ENCODE measurements at regions of chr12 and their contacts with region 1.

Region 1: DNA sequence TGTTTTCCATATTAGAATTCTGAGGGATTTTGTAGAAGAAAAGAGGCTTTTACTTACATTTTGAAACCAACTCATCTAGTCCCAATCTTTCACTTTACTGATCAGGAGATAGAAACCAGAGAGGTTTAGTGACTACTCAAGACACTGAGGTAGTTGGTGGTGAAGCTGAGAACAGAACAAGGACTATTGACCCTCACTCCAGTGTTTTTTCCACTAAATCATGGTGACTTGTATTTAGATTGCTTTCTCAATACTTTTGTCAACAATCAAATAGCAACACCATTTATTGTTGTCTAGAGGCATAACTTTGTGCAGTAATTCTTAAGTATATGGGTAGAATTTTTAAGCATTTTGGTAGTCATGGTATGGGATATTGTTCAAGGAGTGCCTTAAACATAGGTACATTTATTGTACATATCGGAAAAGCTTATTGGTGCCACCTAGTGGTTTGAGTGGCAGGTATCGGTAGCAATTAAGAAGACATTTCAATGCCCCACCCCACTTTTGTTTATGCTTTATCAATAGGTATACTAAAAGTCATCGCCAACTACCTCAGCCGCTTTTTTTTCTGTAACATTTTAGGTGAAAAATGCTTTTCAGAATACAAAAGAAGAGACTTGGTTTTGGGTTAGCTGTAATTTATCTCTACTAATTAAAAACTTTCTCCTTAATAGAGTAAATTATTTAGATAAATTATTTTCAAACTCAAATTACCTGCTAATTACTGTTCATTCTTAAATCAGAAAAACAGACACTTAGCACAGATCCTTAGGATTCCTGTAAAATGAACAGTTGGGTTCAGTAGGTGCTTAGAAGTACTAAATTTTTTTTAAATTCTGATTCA is 47.3 kb upstream of the PAWR start:
- DNase-seq: no peak
- H3K4me3 Mint-ChIP-seq: no peak overlapping the region
- H3K27ac Mint-ChIP-seq: no peak overlapping the region
- H3K4me1 Mint-ChIP-seq: no peaks in the 10 kb centered on the region
- H3K27me3 Mint-ChIP-seq: peaks cover 4% of the 10 kb centered on the region

Region 2: DNA sequence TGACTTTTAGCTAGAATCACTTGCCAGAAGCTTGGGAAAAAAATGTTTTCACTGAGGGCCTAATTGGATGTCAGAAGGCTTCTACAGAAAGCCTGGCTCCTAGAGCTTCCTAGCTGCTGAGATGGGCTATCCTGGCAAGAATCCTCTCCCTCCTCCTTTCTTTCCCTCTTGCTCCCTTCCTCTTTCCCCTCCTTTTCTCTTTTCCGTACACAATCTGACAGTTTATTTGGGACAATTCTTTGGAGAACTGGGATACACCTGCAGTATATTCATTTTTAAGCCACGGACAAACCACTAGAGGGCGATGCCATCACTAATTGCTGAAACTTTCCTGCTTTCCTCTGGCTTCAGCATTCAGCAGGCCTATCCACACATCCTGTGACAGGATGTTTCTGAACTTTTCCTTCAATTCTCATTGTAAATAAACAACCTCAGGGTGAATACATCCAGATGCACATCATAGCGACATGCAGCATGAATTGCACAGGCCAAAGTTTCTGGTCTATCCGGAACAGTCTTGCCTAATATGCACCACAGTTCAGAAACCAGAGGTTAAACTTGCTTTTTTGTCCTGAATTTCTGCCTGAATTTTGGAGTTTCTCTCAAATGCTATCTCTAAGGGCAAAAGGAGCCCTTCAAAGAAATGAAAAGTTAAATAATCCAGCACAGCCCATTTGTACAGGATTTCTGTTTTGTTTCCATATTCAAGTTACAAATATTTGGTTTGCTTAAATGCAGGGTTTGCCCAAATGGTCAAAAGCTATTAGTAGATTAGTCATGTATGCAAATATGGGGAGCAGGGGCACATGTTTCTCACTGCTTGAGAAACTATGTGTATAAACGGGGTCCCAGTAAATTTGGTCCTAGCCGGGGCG is 190.1 kb before region 1 on chr12:
- intact Hi-C with region 1: loop called (anchors 1 kb)
- DNase-seq: no peak
- H3K4me3 Mint-ChIP-seq: no peak overlapping the region
- H3K27ac Mint-ChIP-seq: no peak overlapping the region
- H3K4me1 Mint-ChIP-seq: no peaks in the 10 kb centered on the region
- H3K27me3 Mint-ChIP-seq: no peaks in the 10 kb centered on the region

Region 3: GRCh38 chr12:79645235-79645630 is 92.9 kb before region 1 on chr12:
- intact Hi-C with region 1: no loop called
- DNase-seq: no peak
- H3K4me3 Mint-ChIP-seq: no peak overlapping the region
- H3K27ac Mint-ChIP-seq: no peak overlapping the region
- H3K4me1 Mint-ChIP-seq: no peaks in the 10 kb centered on the region
- H3K27me3 Mint-ChIP-seq: no peaks in the 10 kb centered on the region

Region 4: DNA sequence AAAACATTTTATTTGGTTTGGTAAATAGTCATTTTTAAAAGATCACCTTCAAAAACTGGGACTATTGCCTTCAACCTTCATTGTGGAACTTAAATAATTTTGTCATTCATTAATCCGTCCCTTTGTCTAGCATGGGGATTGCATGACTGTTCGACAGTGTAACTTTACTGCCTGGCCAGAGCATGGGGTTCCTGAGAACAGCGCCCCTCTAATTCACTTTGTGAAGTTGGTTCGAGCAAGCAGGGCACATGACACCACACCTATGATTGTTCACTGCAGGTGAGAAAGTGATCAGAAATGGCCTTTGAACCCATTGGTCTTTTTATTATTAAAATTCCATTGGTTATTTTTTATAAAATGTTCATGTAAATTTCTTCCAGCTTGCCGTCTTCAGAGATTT is 932.1 kb after region 1 on chr12:
- intact Hi-C with region 1: no loop called
- DNase-seq: no peak
- H3K4me3 Mint-ChIP-seq: no peak overlapping the region
- H3K27ac Mint-ChIP-seq: no peak overlapping the region
- H3K4me1 Mint-ChIP-seq: no peaks in the 10 kb centered on the region
- H3K27me3 Mint-ChIP-seq: no peaks in the 10 kb centered on the region